Activated B cell treated with CpG ODN at 0.5 μM for 24 hours (primary cell): ENCODE measurements at regions of chr4 and their contacts with region 1.

Region 1: GRCh38 chr4:183504064-183504929 is 561 bp upstream of the ING2 start:
- DNase-seq: peak; percentile 100
- ATAC-seq: peak; percentile 82
- H3K4me3 Mint-ChIP-seq: peak overlapping the region; percentile 96
- H3K27ac Mint-ChIP-seq: peak overlapping the region; percentile 90
- H3K4me1 Mint-ChIP-seq: peaks cover 14% of the 10 kb centered on the region
- H3K27me3 Mint-ChIP-seq: no peaks in the 10 kb centered on the region
- CTCF ChIP-seq: no peak

Region 2: DNA sequence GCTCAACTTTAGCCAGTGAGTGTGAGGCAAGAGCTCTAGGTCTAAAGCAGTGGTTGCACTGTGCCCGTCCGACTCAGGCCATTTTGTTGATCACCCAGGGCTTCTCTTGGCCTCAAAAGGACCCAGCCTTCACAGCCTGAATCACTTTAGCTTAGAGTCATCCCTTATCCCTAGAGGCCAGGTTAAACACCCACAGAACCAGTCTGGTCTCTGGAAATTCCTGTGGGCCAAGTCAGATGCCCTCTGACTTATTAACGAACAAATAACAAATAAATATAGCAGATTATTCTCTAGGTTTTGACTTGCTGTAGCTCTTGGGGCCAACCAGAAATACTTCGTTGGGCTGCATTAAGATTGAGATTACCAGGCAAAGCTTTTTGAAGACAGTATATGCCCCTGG is 302.9 kb before region 1 on chr4:
- CTCF ChIA-PET with region 1: no interaction called
- POLR2A ChIA-PET with region 1: no interaction called
- intact Hi-C with region 1: no loop called
- DNase-seq: no peak
- ATAC-seq: no peak
- H3K4me3 Mint-ChIP-seq: no peak overlapping the region
- H3K27ac Mint-ChIP-seq: no peak overlapping the region
- H3K4me1 Mint-ChIP-seq: no peaks in the 10 kb centered on the region
- H3K27me3 Mint-ChIP-seq: no peaks in the 10 kb centered on the region
- CTCF ChIP-seq: no peak

Region 3: GRCh38 chr4:183398227-183399125 is 105.8 kb before region 1 on chr4:
- CTCF ChIA-PET with region 1: no interaction called
- POLR2A ChIA-PET with region 1: no interaction called
- intact Hi-C with region 1: loop called (anchors 2 kb)
- DNase-seq: peak; percentile 57
- ATAC-seq: peak; percentile 89
- H3K4me3 Mint-ChIP-seq: peak overlapping the region; percentile 82
- H3K27ac Mint-ChIP-seq: peak overlapping the region; percentile 82
- H3K4me1 Mint-ChIP-seq: peaks cover 25% of the 10 kb centered on the region
- H3K27me3 Mint-ChIP-seq: peaks cover 7% of the 10 kb centered on the region
- CTCF ChIP-seq: no peak

Region 4: DNA sequence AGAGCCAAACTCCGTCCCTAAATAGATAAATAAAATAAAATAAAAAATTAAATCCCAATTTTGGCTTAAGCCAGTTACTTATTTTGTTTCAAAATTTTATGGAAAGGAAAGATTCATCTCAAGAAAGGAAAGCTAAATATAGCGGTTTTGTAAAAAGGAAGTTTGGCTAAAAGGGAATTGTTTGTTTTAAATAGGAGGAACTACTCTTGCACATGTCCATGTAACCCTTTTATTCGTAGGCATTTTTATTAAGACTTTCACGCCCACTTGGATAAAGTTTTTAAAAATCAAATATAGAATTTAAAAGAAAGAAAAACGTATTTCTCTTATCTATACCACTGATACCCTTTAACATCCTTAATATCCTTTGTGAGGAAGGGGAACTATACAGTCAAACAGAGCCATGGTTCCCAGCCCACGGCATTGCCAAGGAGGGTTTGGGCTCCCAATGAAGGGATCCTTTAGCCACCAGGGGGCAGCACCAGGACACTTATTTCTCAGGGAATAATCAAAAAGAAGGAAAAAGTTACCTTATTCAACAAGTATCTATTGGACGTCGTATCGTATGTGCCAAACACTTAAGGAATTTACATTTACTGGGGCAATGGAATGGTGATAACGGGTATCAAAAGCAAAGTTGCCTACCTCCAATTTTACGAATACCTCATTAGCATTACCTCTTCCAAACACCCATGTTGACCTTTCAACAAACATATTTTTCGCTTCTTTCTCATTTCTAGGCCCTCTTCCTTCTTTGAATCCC is 32.2 kb before region 1 on chr4:
- CTCF ChIA-PET with region 1: no interaction called
- POLR2A ChIA-PET with region 1: no interaction called
- intact Hi-C with region 1: loop called (anchors 1 kb)
- DNase-seq: peak; percentile 60
- ATAC-seq: peak; percentile 73
- H3K4me3 Mint-ChIP-seq: no peak overlapping the region
- H3K27ac Mint-ChIP-seq: no peak overlapping the region
- H3K4me1 Mint-ChIP-seq: peaks cover 2% of the 10 kb centered on the region
- H3K27me3 Mint-ChIP-seq: no peaks in the 10 kb centered on the region
- CTCF ChIP-seq: peak; percentile 67

Region 5: GRCh38 chr4:184343502-184344177 is 839.3 kb after region 1 on chr4:
- CTCF ChIA-PET with region 1: no interaction called
- POLR2A ChIA-PET with region 1: no interaction called
- intact Hi-C with region 1: loop called (anchors 10 kb)
- DNase-seq: peak; percentile 39
- ATAC-seq: peak; percentile 50
- H3K4me3 Mint-ChIP-seq: peak overlapping the region; percentile 86
- H3K27ac Mint-ChIP-seq: peak overlapping the region; percentile 83
- H3K4me1 Mint-ChIP-seq: peaks cover 73% of the 10 kb centered on the region
- H3K27me3 Mint-ChIP-seq: no peaks in the 10 kb centered on the region
- CTCF ChIP-seq: no peak

Region 6: DNA sequence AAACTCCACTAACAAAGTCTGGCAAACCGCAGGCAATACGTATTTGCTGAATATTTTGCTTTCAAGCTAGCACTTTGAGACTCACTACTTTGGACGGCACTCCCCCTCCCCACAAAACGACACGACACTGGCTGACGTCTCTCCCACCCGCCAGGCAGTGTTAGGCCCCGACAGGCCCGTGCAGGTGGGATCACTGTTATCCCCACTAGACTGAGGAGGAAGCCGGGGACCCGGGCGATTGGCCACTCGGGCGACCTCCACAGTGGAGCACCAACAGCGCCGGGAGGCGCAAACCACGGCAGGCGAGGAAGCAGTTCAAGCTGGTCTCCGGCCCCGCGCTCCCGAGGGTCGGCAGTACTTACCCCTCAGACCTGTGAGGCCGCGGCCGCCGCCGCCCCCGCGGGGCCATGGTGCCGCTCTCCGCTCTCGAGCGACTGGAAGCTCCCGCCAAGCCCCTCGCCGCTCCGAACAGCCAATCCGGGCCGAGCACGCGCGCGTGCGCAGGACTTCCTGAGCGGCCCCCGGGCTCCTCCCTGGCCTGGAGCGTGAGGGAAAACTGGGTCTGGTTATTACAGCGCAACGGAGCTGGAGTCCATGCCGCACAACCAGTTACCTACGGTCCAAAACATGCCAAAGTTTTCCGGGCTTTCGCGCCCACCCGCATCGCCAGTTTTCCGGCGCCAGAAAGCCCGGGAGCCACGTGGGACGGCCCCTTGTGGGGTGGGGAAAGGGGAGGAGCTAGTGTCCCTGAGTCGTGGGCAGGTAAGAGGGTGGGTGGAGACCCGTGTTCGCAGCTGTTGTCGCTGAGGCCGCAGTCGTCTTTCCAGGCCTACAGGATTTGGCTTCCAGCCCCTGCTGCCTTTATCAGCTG is 1229.6 kb after region 1 on chr4 and contains the start of gene CENPU:
- CTCF ChIA-PET with region 1: no interaction called
- POLR2A ChIA-PET with region 1: no interaction called
- intact Hi-C with region 1: loop called (anchors 10 kb)
- DNase-seq: peak; percentile 95
- ATAC-seq: peak; percentile 96
- H3K4me3 Mint-ChIP-seq: peak within 1 kb of the TSS; percentile 88
- H3K27ac Mint-ChIP-seq: peak within 1 kb of the TSS; percentile 85
- H3K4me1 Mint-ChIP-seq: peaks cover 19% of the 10 kb centered on the region
- H3K27me3 Mint-ChIP-seq: no peaks in the 10 kb centered on the region
- CTCF ChIP-seq: no peak
- total RNA-seq, gene CENPU: 7.0 and 7.1 TPM in 2 replicates

Region 7: DNA sequence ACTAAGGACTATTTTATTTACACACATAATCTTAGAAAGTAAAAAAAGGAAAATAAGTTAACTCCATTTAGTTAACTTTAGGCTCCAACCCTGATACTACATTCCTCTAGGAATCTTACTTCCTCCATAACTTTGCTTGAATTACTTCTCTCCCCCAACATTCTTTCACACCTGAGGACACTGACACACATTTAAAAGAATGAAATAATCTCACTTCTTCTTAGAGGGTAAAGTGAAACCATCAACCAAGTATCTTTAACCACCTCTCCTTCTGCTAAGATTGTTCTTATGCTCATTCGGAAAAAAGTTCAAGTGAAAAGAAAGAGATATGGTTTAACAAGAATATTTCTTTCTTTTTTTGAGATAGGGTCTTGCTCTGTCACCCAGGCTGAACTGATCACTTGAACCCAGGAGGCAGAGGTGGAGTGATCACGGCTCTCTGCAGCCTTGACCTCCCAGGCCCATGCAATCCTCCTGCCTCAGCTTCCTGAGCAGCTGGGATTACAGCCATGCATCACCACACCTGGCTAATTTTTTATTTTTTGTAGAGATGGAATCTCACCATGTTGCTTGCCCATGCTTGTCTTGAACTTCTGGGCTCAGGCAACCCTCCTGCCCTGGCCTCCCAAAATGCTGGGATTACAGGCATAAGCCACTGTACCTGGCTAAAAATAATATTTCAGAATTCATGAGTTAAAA is 1667.2 kb after region 1 on chr4:
- CTCF ChIA-PET with region 1: no interaction called
- POLR2A ChIA-PET with region 1: interaction called, 10 read pairs
- intact Hi-C with region 1: no loop called
- DNase-seq: no peak
- ATAC-seq: peak; percentile 42
- H3K4me3 Mint-ChIP-seq: peak overlapping the region; percentile 0
- H3K27ac Mint-ChIP-seq: peak overlapping the region; percentile 30
- H3K4me1 Mint-ChIP-seq: peaks cover 16% of the 10 kb centered on the region
- H3K27me3 Mint-ChIP-seq: no peaks in the 10 kb centered on the region
- CTCF ChIP-seq: no peak